Naive thymus-derived CD4-positive, alpha-beta T cell (primary cell): ENCODE measurements at regions of chr10 and their contacts with region 1.

Region 1: DNA sequence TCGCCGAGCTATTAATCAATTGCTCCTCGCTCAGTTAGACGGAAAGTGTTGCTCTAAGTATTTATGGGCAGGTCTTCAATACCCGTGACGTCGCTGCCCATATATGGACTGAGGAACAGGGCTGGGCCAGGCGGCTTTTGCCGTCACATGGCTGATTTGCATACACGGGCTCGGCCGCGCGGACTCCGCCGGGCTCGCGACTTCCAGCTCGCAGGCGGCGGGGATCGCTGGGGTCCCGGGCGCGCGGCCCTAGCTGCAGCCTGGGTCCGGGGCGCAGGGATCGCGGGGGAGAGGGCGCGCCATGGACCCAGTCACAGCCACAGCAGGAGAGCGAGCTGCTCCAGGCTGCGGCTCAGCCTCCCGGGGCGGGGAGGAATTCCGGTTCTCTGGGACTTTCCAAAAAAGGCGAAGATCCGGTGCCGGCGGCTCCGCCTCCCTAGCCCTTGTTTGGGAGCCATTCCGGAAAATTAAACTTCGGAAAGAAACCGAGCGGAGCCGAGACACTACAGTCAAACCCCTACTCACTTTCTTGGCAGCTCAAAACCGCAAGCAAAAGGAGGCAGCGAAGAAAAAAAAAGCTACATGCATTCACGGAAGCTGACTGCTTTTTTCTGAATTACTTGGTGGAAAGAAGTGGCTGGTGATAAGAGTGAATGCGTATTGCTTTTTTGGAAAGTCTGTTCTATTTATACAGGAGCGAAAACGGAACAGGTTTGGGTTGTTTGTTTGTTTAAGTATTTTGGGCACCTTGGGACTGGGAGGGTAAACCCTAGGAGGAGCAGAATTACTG is at the start of gene EGR2:
- DNase-seq: peak; percentile 92 to 99 (median 98)
- ATAC-seq: peak; percentile 88
- H3K4me3 ChIP-seq: peak within 1 kb of the TSS; percentile 69
- H3K4me3 Mint-ChIP-seq: peak within 1 kb of the TSS; percentile 89 to 100 (median 98)
- H3K27ac ChIP-seq: peak within 1 kb of the TSS; percentile 76
- H3K27ac Mint-ChIP-seq: peak within 1 kb of the TSS; percentile 86 to 99 (median 95)
- H3K4me1 ChIP-seq: peaks cover 17 to 23% of the 10 kb centered on the region in 2 donors
- H3K4me1 Mint-ChIP-seq: peaks cover 36 to 62% (median 49%) of the 10 kb centered on the region in 7 donors
- H3K27me3 ChIP-seq: peaks cover 3 to 7% of the 10 kb centered on the region in 2 donors
- H3K27me3 Mint-ChIP-seq: peaks cover 26 to 74% (median 31%) of the 10 kb centered on the region in 5 donors
- total RNA-seq, gene EGR2: 0.46 to 14.2 (median 2.7) TPM

Region 2: GRCh38 chr10:62183442-62183841 is 633.1 kb before region 1 on chr10:
- CTCF ChIA-PET with region 1: no interaction called
- POLR2A ChIA-PET with region 1: no interaction called
- intact Hi-C with region 1: loop called (anchors 2 to 5 kb)
- DNase-seq: peak in 8 of 9 donors; percentile 45 to 95 (median 90)
- ATAC-seq: peak; percentile 96
- H3K4me3 ChIP-seq: no peak overlapping the region
- H3K4me3 Mint-ChIP-seq: peak overlapping the region; percentile 10 to 77 (median 62)
- H3K27ac ChIP-seq: peak overlapping the region; percentile 74
- H3K27ac Mint-ChIP-seq: peak overlapping the region; percentile 84 to 98 (median 93)
- H3K4me1 ChIP-seq: peaks cover 36 to 67% of the 10 kb centered on the region in 2 donors
- H3K4me1 Mint-ChIP-seq: peaks cover 28 to 99% (median 87%) of the 10 kb centered on the region in 7 donors
- H3K27me3 ChIP-seq: no peaks in the 10 kb centered on the region
- H3K27me3 Mint-ChIP-seq: no peaks in the 10 kb centered on the region

Region 3: DNA sequence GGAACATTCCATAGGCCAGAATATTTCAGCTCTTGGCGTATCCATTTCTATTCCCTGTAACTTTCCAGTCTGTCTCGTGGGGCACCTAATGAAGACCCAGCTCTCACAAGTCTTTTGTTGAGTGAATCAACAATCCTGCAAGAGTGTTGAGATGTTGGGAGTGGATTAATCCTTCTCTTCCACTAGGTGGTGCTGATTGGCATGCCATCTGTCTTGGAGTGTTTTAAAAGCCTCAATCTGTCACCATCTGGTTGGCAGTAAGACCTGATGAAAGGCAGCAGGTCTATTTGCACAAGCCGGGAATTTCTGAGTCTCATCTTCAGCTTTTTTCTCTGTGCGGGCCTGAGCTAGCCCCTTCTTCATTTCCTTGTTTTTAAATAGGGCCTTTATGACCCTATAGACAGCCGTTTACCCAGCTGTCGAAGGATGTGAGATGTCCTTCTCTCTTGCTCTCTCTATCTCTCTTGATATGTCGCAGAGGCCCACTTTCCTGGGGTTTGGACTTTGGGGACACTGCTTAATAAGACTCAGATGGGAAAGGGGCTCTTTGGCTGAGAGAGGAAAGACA is 261.8 kb before region 1 on chr10:
- CTCF ChIA-PET with region 1: no interaction called
- POLR2A ChIA-PET with region 1: no interaction called
- intact Hi-C with region 1: loop called in 1 of 2 experiments (anchors 1 kb)
- DNase-seq: peak in 7 of 9 donors; percentile 8 to 34 (median 24)
- ATAC-seq: peak; percentile 67
- H3K4me3 ChIP-seq: no peak overlapping the region
- H3K4me3 Mint-ChIP-seq: no peak overlapping the region
- H3K27ac ChIP-seq: no peak overlapping the region
- H3K27ac Mint-ChIP-seq: no peak overlapping the region
- H3K4me1 ChIP-seq: no peaks in the 10 kb centered on the region
- H3K4me1 Mint-ChIP-seq: no peaks in the 10 kb centered on the region
- H3K27me3 ChIP-seq: no peaks in the 10 kb centered on the region
- H3K27me3 Mint-ChIP-seq: peaks cover 4 to 34% (median 11%) of the 10 kb centered on the region in 5 donors

Region 4: GRCh38 chr10:62666275-62666674 is 150.3 kb before region 1 on chr10:
- CTCF ChIA-PET with region 1: no interaction called
- POLR2A ChIA-PET with region 1: no interaction called
- intact Hi-C with region 1: no loop called
- DNase-seq: no peak
- ATAC-seq: peak; percentile 58
- H3K4me3 ChIP-seq: no peak overlapping the region
- H3K4me3 Mint-ChIP-seq: no peak overlapping the region
- H3K27ac ChIP-seq: no peak overlapping the region
- H3K27ac Mint-ChIP-seq: no peak overlapping the region
- H3K4me1 ChIP-seq: no peaks in the 10 kb centered on the region
- H3K4me1 Mint-ChIP-seq: peaks cover 0 to 19% (median 2%) of the 10 kb centered on the region in 7 donors
- H3K27me3 ChIP-seq: no peaks in the 10 kb centered on the region
- H3K27me3 Mint-ChIP-seq: peaks cover 0 to 7% (median 0%) of the 10 kb centered on the region in 5 donors

Region 5: GRCh38 chr10:62681211-62681940 is 135.2 kb before region 1 on chr10:
- CTCF ChIA-PET with region 1: interaction called, 3 read pairs
- POLR2A ChIA-PET with region 1: no interaction called
- intact Hi-C with region 1: loop called in 1 of 2 experiments (anchors 1 kb)
- DNase-seq: peak in 8 of 9 donors; percentile 7 to 84 (median 22)
- ATAC-seq: peak; percentile 96
- H3K4me3 ChIP-seq: no peak overlapping the region
- H3K4me3 Mint-ChIP-seq: peak overlapping the region in 1 of 10 donors; percentile 59
- H3K27ac ChIP-seq: no peak overlapping the region
- H3K27ac Mint-ChIP-seq: peak overlapping the region in 3 of 9 donors; percentile 11 to 83 (median 78)
- H3K4me1 ChIP-seq: peaks cover 6 to 18% of the 10 kb centered on the region in 2 donors
- H3K4me1 Mint-ChIP-seq: peaks cover 8 to 45% (median 14%) of the 10 kb centered on the region in 7 donors
- H3K27me3 ChIP-seq: no peaks in the 10 kb centered on the region
- H3K27me3 Mint-ChIP-seq: peaks cover 0 to 6% (median 0%) of the 10 kb centered on the region in 5 donors

Region 6: DNA sequence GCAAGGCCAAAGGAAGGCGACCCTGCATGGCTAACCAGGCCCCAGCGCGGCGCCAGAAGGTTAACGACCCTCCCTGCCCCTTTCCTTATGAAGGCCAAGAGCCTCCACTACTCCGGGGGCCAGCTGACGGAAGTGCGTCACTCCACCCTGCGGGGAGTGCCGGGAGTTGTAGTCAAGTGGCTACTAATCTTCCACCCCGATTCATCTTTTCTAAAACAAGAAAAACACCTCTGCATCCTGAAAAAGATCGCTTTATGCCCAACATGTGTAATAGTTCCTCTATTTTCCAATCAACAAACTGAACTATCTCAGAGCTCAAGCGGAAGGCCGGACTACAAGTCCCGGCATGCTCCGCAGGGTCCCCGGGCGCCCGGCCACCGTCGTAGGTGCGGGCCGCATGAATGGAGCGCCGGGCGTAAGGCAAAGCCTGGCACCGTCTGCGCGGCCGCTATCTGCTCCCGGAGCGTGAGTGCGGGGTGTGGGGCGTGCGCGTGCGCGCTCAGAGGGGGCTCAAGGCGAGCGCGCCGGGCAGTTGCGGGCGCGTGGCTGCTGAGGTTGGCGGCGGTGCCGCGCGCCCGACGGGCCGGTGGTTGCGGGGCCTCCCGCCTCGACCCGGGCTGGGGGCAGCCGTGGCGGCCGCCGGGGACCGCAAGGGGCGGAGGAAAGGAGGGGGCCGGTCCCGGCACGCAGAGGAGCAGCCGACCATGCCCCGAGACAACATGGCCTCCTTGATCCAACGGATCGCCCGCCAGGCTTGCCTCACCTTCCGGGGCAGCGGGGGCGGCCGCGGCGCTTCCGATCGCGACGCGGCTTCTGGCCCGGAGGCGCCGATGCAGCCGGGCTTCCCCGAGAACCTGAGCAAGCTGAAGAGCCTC is 11.9 kb before region 1 on chr10 and contains the start of gene ADO:
- CTCF ChIA-PET with region 1: interaction called, 11 read pairs
- POLR2A ChIA-PET with region 1: interaction called, 80 read pairs
- intact Hi-C with region 1: loop called (anchors 1 kb)
- DNase-seq: peak; percentile 69 to 86 (median 80)
- ATAC-seq: peak; percentile 93
- H3K4me3 ChIP-seq: peak within 1 kb of the TSS; percentile 66
- H3K4me3 Mint-ChIP-seq: peak within 1 kb of the TSS; percentile 90 to 100 (median 96)
- H3K27ac ChIP-seq: peak within 1 kb of the TSS; percentile 86
- H3K27ac Mint-ChIP-seq: peak within 1 kb of the TSS; percentile 93 to 100 (median 98)
- H3K4me1 ChIP-seq: peaks cover 15 to 19% of the 10 kb centered on the region in 2 donors
- H3K4me1 Mint-ChIP-seq: peaks cover 22 to 47% (median 39%) of the 10 kb centered on the region in 7 donors
- H3K27me3 ChIP-seq: no peaks in the 10 kb centered on the region
- H3K27me3 Mint-ChIP-seq: peaks cover 0 to 20% (median 0%) of the 10 kb centered on the region in 5 donors
- total RNA-seq, gene ADO: 9.8 to 21.3 (median 15.6) TPM

Region 7: DNA sequence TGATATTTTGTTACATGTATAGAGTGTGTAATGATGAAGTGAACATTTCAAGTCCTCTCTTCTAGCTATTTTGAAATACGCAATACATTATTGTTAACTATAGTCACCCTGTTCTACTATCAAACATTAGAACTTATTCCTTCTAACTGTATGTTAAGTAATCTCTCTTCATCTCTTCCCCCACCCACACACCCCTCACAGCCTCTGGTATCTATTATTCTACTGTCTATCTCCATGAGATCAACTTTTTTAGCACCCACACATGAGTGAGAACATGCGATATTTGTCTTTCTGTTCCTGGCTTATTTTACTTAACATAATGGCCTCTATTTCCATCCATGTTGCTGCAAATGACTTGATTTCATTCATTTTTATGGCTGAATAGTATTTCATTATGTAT is 57.3 kb after region 1 on chr10:
- CTCF ChIA-PET with region 1: no interaction called
- POLR2A ChIA-PET with region 1: no interaction called
- intact Hi-C with region 1: no loop called
- DNase-seq: no peak
- ATAC-seq: no peak
- H3K4me3 ChIP-seq: no peak overlapping the region
- H3K4me3 Mint-ChIP-seq: no peak overlapping the region
- H3K27ac ChIP-seq: no peak overlapping the region
- H3K27ac Mint-ChIP-seq: no peak overlapping the region
- H3K4me1 ChIP-seq: no peaks in the 10 kb centered on the region
- H3K4me1 Mint-ChIP-seq: peaks cover 0 to 1% (median 0%) of the 10 kb centered on the region in 7 donors
- H3K27me3 ChIP-seq: no peaks in the 10 kb centered on the region
- H3K27me3 Mint-ChIP-seq: peaks cover 4 to 30% (median 15%) of the 10 kb centered on the region in 5 donors

Region 8: DNA sequence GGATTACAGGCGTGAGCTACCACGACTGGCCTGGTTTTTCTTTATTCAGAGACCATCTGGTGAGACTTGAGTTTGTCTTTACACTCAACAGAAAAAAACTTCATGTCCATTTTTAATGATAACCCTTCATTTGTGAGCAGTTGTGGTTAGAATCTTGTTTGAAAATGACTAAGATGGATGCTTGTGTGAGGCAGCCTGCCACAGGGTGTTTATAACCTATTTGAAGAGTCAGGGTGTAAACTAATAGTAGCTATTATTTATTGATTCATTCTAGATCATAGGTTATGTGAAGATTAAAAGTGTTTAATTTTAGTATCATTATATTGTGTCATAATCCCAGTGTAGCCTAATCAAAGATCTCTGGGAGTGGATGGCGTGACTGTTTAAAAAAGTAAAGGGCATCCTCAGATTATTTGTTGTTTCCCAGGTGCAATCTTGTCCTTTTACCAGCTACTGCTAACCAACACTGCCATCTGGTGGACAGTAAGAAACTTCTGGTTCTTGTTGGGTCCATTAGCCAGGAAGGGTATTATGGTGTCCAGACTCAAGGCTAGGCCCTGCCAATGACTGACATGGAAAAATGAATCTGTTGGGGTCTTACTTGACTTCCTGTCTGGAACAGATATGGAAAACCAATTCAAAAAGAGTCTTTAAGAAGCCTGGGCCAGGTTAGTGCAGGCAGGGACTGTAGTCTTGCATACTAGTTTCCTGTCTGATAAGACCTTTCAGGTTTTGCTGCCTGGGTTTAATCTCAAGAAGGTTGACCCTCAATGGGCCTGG is 341.5 kb after region 1 on chr10:
- CTCF ChIA-PET with region 1: interaction called, 10 read pairs
- POLR2A ChIA-PET with region 1: no interaction called
- intact Hi-C with region 1: loop called (anchors 1 to 2 kb)
- DNase-seq: peak in 7 of 9 donors; percentile 43 to 71 (median 65)
- ATAC-seq: peak; percentile 84
- H3K4me3 ChIP-seq: no peak overlapping the region
- H3K4me3 Mint-ChIP-seq: no peak overlapping the region
- H3K27ac ChIP-seq: no peak overlapping the region
- H3K27ac Mint-ChIP-seq: peak overlapping the region in 2 of 9 donors; percentile 2 to 30
- H3K4me1 ChIP-seq: no peaks in the 10 kb centered on the region
- H3K4me1 Mint-ChIP-seq: peaks cover 6 to 18% (median 11%) of the 10 kb centered on the region in 7 donors
- H3K27me3 ChIP-seq: no peaks in the 10 kb centered on the region
- H3K27me3 Mint-ChIP-seq: no peaks in the 10 kb centered on the region